ENCODE measurements at regions of chr2 and their contacts with region 1.

Region 1: GRCh38 chr2:143183804-143184463 is 54.7 kb downstream of the ARHGAP15 start:
- DNase-seq: no peak
- H3K4me3 Mint-ChIP-seq: no peak overlapping the region
- H3K27ac Mint-ChIP-seq: no peak overlapping the region
- H3K4me1 Mint-ChIP-seq: no peaks in the 10 kb centered on the region
- H3K27me3 Mint-ChIP-seq: no peaks in the 10 kb centered on the region
- CTCF ChIP-seq: no peak

Region 2: DNA sequence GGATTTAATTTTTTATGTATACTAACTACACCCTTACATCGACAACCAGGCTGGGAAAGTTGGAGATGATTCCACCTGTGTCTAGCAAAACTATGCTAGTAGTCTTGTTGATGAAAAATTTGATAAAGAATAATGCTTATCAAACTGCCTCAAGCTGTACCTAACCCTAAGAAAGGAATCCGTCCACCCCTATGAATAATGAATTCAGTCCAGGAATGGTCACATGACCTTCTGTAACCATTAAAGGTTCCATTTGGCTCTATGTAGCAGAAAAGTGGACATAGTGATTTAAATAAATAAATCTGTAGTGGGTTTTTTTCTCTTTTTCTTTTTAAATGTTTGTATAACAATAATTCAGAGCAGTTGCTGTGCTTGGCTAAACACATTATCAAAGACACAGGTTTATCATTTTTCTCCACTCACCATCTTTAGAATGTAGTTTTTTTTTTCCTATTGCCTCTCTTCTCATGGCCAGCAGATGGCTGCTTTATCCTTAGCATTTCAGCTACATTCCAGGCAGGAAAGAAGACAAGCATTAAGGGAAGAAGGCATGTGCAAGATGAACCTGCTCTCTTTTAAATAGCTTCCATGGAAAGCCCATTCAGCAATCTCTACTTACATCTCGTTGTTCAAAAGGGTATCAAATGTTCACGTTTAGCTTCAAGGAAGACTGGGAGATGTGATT is 12.3 kb before region 1 on chr2:
- CTCF ChIA-PET with region 1: interaction called, 16 read pairs
- POLR2A ChIA-PET with region 1: no interaction called
- intact Hi-C with region 1: no loop called
- DNase-seq: peak; percentile 12
- H3K4me3 Mint-ChIP-seq: no peak overlapping the region
- H3K27ac Mint-ChIP-seq: no peak overlapping the region
- H3K4me1 Mint-ChIP-seq: peaks cover 15% of the 10 kb centered on the region
- H3K27me3 Mint-ChIP-seq: no peaks in the 10 kb centered on the region
- CTCF ChIP-seq: no peak

Region 3: DNA sequence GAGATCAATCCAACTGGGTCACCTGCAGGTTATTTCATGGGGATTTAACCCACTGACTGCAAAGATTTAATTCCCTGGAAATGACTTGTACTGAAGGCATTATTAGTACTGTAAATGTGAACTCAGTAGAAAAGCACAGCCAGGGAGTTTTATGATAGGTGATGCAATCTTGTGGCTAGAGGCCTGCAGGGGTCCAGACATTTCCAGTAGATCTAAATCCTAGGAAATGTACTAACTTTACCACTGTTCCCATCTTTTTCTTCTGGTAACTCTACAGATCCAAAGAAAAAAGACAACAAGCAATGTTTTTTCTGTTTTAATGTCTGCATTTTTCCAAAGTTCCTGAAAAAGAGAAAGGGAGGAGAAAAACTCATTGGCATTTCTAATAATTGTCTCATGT is 445.4 kb after region 1 on chr2:
- CTCF ChIA-PET with region 1: no interaction called
- POLR2A ChIA-PET with region 1: no interaction called
- intact Hi-C with region 1: no loop called
- DNase-seq: peak; percentile 34
- H3K4me3 Mint-ChIP-seq: no peak overlapping the region
- H3K27ac Mint-ChIP-seq: no peak overlapping the region
- H3K4me1 Mint-ChIP-seq: no peaks in the 10 kb centered on the region
- H3K27me3 Mint-ChIP-seq: no peaks in the 10 kb centered on the region
- CTCF ChIP-seq: no peak

Region 4: DNA sequence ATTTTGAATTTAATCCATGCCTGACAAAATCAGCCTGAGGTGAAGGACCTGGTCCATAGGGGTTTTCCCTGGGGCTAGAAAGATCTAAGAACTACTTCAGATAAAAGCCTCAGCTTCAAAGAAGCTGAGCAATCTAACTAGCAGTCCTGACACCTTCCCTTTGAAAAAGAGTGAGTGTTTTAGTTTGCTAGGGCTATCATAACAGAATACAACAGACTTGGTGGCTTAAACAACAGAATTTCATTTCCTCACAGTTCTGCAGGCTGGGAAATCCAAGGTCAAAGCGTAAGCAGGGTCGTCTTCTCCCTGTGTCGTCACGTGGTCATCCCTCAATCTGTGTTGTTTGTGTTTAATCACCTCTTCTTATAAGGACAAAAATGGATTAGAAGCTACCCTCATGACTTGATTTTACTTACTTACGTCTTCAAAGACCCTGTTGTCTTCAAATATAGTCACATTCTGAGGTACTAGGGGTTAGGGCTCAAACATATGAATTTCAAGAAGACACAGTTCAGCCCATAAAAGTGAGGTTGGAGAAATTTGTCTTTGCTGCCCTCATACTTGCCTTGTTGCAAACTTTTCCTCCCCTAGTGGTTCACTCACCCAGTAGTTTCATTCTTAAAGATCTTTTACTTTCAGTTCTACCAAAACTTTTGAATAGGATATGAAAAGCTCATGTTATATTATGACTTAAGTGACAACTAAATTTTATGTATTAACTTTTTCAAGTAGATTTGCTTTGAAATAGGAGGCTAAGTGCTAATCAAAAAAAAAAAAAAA is 619.1 kb after region 1 on chr2:
- CTCF ChIA-PET with region 1: no interaction called
- POLR2A ChIA-PET with region 1: no interaction called
- intact Hi-C with region 1: no loop called
- DNase-seq: no peak
- H3K4me3 Mint-ChIP-seq: no peak overlapping the region
- H3K27ac Mint-ChIP-seq: no peak overlapping the region
- H3K4me1 Mint-ChIP-seq: peaks cover 5% of the 10 kb centered on the region
- H3K27me3 Mint-ChIP-seq: no peaks in the 10 kb centered on the region
- CTCF ChIP-seq: no peak

Region 5: GRCh38 chr2:144426981-144427479 is 1243.1 kb after region 1 on chr2:
- CTCF ChIA-PET with region 1: no interaction called
- POLR2A ChIA-PET with region 1: no interaction called
- intact Hi-C with region 1: no loop called
- DNase-seq: peak; percentile 18
- H3K4me3 Mint-ChIP-seq: no peak overlapping the region
- H3K27ac Mint-ChIP-seq: peak overlapping the region; percentile 44
- H3K4me1 Mint-ChIP-seq: peaks cover 14% of the 10 kb centered on the region
- H3K27me3 Mint-ChIP-seq: no peaks in the 10 kb centered on the region
- CTCF ChIP-seq: no peak